H1 (cell line): ENCODE measurements at regions of chr5 and their contacts with region 1.

Region 1: GRCh38 chr5:79020861-79021561 is 35.9 kb upstream of the ARSB start:
- DNase-seq: peak; percentile 33 to 61
- H3K4me3 ChIP-seq: peak overlapping the region in 1 of 4 experiments; percentile 42; a peak in 1 of 8 replicates
- H3K27ac ChIP-seq: no peak overlapping the region
- H3K4me1 ChIP-seq: peaks cover 3 to 14% (median 6%) of the 10 kb centered on the region in 4 experiments; a peak in 5 of 7 replicates
- H3K27me3 ChIP-seq: no peaks in the 10 kb centered on the region
- CTCF ChIP-seq: peak; percentile 70 to 80 (median 80)
- EP300 ChIP-seq: no peak
- POLR2A ChIP-seq: no peak
- RAD21 ChIP-seq: peak; percentile 89 to 90

Region 2: DNA sequence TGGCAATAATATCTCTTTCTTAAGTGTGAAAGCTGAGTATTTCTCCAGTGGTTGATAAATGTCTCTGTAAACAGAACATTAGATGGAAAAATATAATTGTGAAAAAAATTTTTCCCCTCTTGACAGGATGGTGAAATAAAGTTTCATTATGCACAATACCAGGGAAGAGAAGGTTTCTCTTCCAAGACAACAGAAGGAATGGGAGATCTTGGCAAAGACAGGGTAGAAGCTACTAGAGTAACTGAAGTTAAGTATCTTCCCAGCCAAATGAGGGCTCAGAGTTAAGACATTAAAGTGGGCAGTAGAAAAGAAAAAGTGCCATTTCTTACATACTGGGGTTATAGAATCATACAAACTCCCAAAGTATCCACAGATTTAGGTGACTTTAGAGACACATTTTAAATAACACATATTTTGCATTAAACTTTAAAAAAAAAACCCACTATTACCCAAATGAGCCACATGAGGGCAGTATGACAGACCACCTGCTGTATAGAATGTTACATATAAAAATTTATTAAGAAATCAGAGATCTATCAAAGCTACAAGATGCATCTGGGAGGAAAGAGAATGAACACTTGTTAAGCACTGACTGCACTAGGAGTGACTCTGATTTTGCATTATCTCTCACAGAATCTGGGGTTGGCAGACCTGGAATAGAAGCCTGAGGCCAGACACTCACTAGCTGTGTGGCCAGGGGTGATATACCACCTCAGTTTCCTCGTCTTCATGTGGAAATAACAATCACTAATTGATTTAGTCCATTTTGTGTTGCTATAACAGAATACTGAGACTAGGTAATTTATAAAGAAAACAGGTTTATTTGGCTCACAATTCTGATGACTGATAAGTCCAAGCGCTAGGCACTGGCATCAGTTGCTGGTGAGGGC is 134.4 kb before region 1 on chr5:
- CTCF ChIA-PET with region 1: interaction called, 15 read pairs
- POLR2A ChIA-PET with region 1: no interaction called
- DNase-seq: no peak
- H3K4me3 ChIP-seq: no peak overlapping the region
- H3K27ac ChIP-seq: no peak overlapping the region
- H3K4me1 ChIP-seq: peaks cover 0 to 7% (median 1%) of the 10 kb centered on the region in 4 experiments; a peak in 1 of 7 replicates
- H3K27me3 ChIP-seq: no peaks in the 10 kb centered on the region
- CTCF ChIP-seq: peak in 1 of 3 experiments; percentile 34; a peak in 2 of 4 replicates
- EP300 ChIP-seq: no peak
- POLR2A ChIP-seq: no peak
- RAD21 ChIP-seq: peak; percentile 18 to 24; a peak in 3 of 4 replicates

Region 3: DNA sequence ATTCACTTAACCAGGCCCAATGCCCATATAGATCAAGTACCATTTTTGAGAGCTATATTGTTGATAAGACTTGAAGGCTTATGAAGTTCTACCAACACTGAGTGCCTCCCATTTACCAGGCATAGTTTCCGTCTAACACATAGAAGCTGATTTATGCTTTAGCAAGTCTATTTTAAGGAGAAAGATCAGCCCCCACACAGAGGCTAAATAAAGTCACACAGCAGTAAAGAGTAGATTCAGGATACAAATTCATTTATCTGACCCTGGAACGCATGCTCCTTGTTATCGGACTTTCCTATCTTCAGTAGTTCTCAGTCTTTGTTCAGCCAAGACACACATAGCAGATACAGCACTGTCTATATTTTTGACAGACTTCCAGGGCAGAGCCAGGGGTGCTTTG is 14.2 kb after region 1 on chr5:
- CTCF ChIA-PET with region 1: interaction called, 19 read pairs
- POLR2A ChIA-PET with region 1: no interaction called
- DNase-seq: no peak
- H3K4me3 ChIP-seq: no peak overlapping the region
- H3K27ac ChIP-seq: no peak overlapping the region
- H3K4me1 ChIP-seq: no peaks in the 10 kb centered on the region
- H3K27me3 ChIP-seq: no peaks in the 10 kb centered on the region
- CTCF ChIP-seq: no peak
- EP300 ChIP-seq: no peak
- POLR2A ChIP-seq: no peak
- RAD21 ChIP-seq: no peak

Region 4: GRCh38 chr5:79074641-79075040 is 53.6 kb after region 1 on chr5:
- CTCF ChIA-PET with region 1: interaction called, 11 read pairs
- POLR2A ChIA-PET with region 1: no interaction called
- DNase-seq: no peak
- H3K4me3 ChIP-seq: no peak overlapping the region
- H3K27ac ChIP-seq: no peak overlapping the region
- H3K4me1 ChIP-seq: no peaks in the 10 kb centered on the region
- H3K27me3 ChIP-seq: no peaks in the 10 kb centered on the region
- CTCF ChIP-seq: no peak
- EP300 ChIP-seq: no peak
- POLR2A ChIP-seq: no peak
- RAD21 ChIP-seq: no peak

Region 5: DNA sequence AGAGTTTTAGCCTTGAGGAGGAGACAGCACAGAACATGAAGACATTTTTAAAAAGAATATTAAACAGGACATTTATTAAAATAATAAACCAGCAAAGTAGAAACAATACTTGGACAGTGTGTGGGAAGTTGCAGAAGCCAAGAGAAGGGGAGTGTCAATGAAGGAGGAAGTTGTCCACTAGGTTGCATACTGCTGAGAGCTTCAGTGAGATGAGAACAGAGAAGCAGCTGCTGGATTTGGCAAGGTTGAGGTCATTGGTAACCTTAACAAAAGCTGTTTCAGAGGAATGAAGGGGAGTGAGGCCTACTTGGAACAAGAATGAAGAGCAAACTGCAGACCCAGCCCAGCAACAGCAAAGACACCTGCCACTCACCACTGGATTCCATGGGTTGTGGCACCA is 102.0 kb after region 1 on chr5:
- CTCF ChIA-PET with region 1: interaction called, 13 read pairs
- POLR2A ChIA-PET with region 1: no interaction called
- DNase-seq: no peak
- H3K4me3 ChIP-seq: no peak overlapping the region
- H3K27ac ChIP-seq: no peak overlapping the region
- H3K4me1 ChIP-seq: no peaks in the 10 kb centered on the region
- H3K27me3 ChIP-seq: no peaks in the 10 kb centered on the region
- CTCF ChIP-seq: no peak
- EP300 ChIP-seq: no peak
- POLR2A ChIP-seq: no peak
- RAD21 ChIP-seq: no peak

Region 6: GRCh38 chr5:79143684-79144379 is 122.8 kb after region 1 on chr5:
- CTCF ChIA-PET with region 1: interaction called, 11 read pairs
- POLR2A ChIA-PET with region 1: no interaction called
- DNase-seq: no peak
- H3K4me3 ChIP-seq: no peak overlapping the region
- H3K27ac ChIP-seq: no peak overlapping the region
- H3K4me1 ChIP-seq: peaks cover 0 to 3% (median 0%) of the 10 kb centered on the region in 4 experiments; a peak in 3 of 7 replicates
- H3K27me3 ChIP-seq: no peaks in the 10 kb centered on the region
- CTCF ChIP-seq: no peak
- EP300 ChIP-seq: no peak
- POLR2A ChIP-seq: no peak
- RAD21 ChIP-seq: no peak